ENCODE measurements at regions of chr7 and their contacts with region 1.

Region 1: DNA sequence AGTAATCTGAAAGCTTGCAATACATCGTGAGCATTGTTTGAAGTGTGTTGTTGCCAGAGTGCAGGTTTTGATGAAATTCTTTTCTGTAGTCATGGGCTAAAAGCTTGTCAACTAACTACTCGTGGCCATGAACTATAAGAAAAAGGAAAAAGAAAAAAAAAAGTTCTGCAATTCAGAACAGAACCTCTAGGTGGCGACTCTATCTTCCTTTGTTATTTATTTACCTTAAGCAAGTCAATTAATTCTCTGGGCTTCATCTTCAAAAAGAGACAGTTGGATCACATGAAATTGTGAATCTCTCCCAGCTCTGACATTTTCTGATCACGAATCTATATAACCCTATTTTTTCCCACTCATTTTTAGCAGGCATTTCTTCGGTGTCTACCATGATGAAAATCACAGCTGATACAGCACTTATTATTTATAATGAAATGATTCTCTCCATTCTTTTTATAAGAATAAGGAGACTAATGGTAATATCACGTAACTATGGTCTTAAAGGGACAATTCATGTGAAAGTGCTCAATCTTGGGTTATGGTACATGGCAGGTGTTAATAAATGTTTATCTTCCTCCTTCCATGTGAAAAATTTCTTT is 18.8 kb downstream of the TMEM196 start:
- DNase-seq: no peak
- H3K4me3 ChIP-seq: no peak overlapping the region
- H3K27ac ChIP-seq: no peak overlapping the region
- H3K4me1 ChIP-seq: no peaks in the 10 kb centered on the region
- H3K27me3 ChIP-seq: no peaks in the 10 kb centered on the region
- CTCF ChIP-seq: peak; percentile 48 to 77 (median 66)
- EP300 ChIP-seq: no peak
- POLR2A ChIP-seq: no peak

Region 2: DNA sequence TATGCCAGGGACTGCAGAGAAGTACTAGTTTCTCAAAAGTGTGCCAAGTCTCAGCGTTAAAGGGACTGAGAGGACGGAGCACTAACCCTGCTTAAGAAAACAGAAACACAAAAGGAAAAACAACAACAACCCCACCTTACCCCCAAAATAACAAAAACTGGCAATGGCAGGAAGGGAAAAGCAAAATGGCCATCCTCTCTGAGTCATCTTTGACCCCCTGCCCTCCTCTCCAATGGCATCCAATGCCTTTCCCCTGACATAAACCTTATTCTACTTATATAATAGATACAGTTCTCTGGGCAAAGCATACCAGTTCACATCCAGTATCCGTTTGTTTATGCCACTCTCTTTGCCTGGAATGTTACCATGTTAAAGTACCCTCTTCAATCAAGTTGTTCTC is 47.4 kb before region 1 on chr7:
- intact Hi-C with region 1: no loop called
- DNase-seq: no peak
- H3K4me3 ChIP-seq: peak overlapping the region in 1 of 4 donors; percentile 81
- H3K27ac ChIP-seq: no peak overlapping the region
- H3K4me1 ChIP-seq: peaks cover 19 to 31% (median 27%) of the 10 kb centered on the region in 4 donors
- H3K27me3 ChIP-seq: no peaks in the 10 kb centered on the region
- CTCF ChIP-seq: no peak
- EP300 ChIP-seq: no peak
- POLR2A ChIP-seq: no peak

Region 3: GRCh38 chr7:19798986-19799385 is 44.4 kb after region 1 on chr7:
- intact Hi-C with region 1: no loop called
- DNase-seq: no peak
- H3K4me3 ChIP-seq: no peak overlapping the region
- H3K27ac ChIP-seq: no peak overlapping the region
- H3K4me1 ChIP-seq: no peaks in the 10 kb centered on the region
- H3K27me3 ChIP-seq: no peaks in the 10 kb centered on the region
- CTCF ChIP-seq: no peak
- EP300 ChIP-seq: no peak
- POLR2A ChIP-seq: no peak

Region 4: GRCh38 chr7:20310963-20311742 is 556.5 kb after region 1 on chr7:
- intact Hi-C with region 1: loop called (anchors 10 kb)
- DNase-seq: no peak
- H3K4me3 ChIP-seq: no peak overlapping the region
- H3K27ac ChIP-seq: no peak overlapping the region
- H3K4me1 ChIP-seq: peaks cover 0 to 30% (median 19%) of the 10 kb centered on the region in 4 donors
- H3K27me3 ChIP-seq: no peaks in the 10 kb centered on the region
- CTCF ChIP-seq: peak in 2 of 3 experiments; percentile 36 to 44
- EP300 ChIP-seq: no peak
- POLR2A ChIP-seq: no peak

Measured in esophagus muscularis mucosa (tissue), 4 donors.